Psoas muscle (tissue), 8 donors: ENCODE measurements at regions of chr1 and their contacts with region 1.

Region 1: GRCh38 chr1:27725374-27726173 is at the start of gene FAM76A:
- DNase-seq: peak; percentile 99 to 100
- ATAC-seq: peak; percentile 96 to 98 (median 96)
- H3K4me3 ChIP-seq: peak within 1 kb of the TSS; percentile 95
- H3K27ac ChIP-seq: peak within 1 kb of the TSS; percentile 94
- H3K4me1 ChIP-seq: peaks cover 18% of the 10 kb centered on the region
- H3K27me3 ChIP-seq: no peaks in the 10 kb centered on the region
- CTCF ChIP-seq: peak; percentile 34
- total RNA-seq, gene FAM76A: 7.6 to 10.7 (median 9.3) TPM

Region 2: GRCh38 chr1:27671964-27672749 is 53.4 kb before region 1 on chr1 and contains the start of gene IFI6:
- intact Hi-C with region 1: loop called (anchors 5 to 10 kb)
- DNase-seq: peak; percentile 79 to 87
- ATAC-seq: peak; percentile 92 to 96 (median 94)
- H3K4me3 ChIP-seq: peak within 1 kb of the TSS; percentile 73
- H3K27ac ChIP-seq: peak within 1 kb of the TSS; percentile 77
- H3K4me1 ChIP-seq: peaks cover 13% of the 10 kb centered on the region
- H3K27me3 ChIP-seq: no peaks in the 10 kb centered on the region
- CTCF ChIP-seq: peak; percentile 36
- total RNA-seq, gene IFI6: 7.8 to 25.8 (median 15.3) TPM

Region 3: DNA sequence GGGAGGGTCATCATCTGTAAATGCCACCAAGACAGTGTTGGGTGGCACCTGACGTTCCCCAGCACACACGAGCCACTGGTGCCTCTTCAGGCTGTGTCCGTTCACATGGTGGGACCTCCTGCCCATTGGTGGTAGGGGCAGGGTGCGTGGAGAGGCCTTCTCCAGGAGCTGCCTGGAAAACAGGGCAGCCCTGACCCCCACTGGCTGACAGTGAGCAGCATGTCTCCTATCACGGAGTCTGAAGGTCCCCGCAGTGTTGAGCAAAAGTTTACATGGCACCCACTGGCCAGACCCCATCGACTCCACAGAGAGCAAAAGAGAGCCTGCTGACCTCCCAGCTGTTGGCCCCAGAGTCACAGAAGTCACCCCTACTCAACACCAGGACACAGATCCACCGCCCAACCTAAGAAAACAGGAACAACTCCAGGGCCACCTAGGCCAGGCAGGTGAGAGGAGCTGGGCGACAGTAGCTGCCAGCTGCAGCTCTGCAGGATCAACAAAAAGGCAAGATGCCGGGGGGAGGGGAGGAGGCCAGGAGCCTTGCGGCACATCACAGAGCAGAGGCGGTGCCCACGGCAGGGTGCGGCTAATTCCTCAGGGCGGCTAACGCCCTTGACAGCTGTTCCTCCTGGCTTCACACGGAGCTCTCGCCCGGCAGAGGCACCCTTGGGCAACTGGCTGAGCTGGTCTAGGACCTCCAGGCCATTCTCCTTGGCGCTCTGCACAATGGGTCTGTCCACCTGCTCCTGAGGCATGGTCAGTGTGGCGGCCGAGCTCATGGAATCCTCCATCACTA is 39.2 kb before region 1 on chr1:
- intact Hi-C with region 1: no loop called
- DNase-seq: no peak
- ATAC-seq: peak in 1 of 4 donors; percentile 19
- H3K4me3 ChIP-seq: no peak overlapping the region
- H3K27ac ChIP-seq: no peak overlapping the region
- H3K4me1 ChIP-seq: no peaks in the 10 kb centered on the region
- H3K27me3 ChIP-seq: peaks cover 0 to 2% (median 0%) of the 10 kb centered on the region in 3 donors
- CTCF ChIP-seq: no peak

Region 4: DNA sequence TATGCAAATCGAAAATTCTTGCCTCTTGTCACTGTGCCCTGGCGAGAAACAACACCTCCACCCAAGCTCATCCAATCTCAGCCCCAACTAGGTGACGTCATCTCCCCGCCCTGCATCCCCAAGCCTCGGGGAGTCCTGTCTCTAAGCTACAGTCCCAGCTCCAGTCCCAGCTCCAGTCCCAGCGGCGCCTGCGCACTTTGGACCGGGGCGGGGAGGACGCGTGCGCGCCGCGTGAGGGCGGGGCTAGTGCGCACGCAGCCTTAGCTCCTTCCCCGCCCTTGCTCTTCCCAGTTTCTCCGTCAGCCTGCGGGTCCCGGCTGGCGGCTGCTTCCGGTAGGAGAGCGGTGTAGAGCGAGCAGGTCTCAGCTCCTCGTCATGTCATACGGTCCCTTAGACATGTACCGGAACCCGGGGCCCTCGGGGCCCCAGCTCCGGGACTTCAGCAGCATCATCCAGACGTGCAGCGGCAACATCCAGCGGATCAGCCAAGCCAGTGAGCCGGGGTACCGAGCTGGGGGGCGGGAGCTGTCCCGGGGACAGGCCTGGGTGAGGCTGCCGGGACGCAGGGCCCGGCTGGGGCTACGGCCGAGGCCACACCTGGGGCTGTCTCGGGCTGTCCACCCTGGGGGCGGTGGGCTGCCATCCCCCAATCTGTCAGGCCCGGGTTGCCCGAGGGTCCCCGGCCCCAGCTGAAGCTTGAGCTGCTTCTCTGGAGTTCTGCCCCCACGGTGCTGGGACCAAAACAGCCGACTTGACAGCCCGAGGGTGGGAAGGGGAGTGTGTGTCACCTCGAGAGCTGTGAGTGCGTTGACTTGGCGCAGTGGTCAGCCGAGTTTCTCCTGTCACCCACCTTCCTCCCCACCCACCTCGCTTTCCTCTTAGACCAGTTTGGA is 47.6 kb after region 1 on chr1 and contains the start of gene STX12:
- intact Hi-C with region 1: loop called in 1 of 2 experiments (anchors 5 kb)
- DNase-seq: peak; percentile 99
- ATAC-seq: peak; percentile 98 to 100 (median 99)
- H3K4me3 ChIP-seq: peak within 1 kb of the TSS; percentile 98
- H3K27ac ChIP-seq: peak within 1 kb of the TSS; percentile 95
- H3K4me1 ChIP-seq: peaks cover 20% of the 10 kb centered on the region
- H3K27me3 ChIP-seq: no peaks in the 10 kb centered on the region
- CTCF ChIP-seq: no peak
- total RNA-seq, gene STX12: 19.5 to 33.6 (median 28.9) TPM

Region 5: GRCh38 chr1:27804791-27805190 is 79.2 kb after region 1 on chr1:
- intact Hi-C with region 1: no loop called
- DNase-seq: no peak
- ATAC-seq: no peak
- H3K4me3 ChIP-seq: no peak overlapping the region
- H3K27ac ChIP-seq: no peak overlapping the region
- H3K4me1 ChIP-seq: no peaks in the 10 kb centered on the region
- H3K27me3 ChIP-seq: no peaks in the 10 kb centered on the region
- CTCF ChIP-seq: no peak

Region 6: DNA sequence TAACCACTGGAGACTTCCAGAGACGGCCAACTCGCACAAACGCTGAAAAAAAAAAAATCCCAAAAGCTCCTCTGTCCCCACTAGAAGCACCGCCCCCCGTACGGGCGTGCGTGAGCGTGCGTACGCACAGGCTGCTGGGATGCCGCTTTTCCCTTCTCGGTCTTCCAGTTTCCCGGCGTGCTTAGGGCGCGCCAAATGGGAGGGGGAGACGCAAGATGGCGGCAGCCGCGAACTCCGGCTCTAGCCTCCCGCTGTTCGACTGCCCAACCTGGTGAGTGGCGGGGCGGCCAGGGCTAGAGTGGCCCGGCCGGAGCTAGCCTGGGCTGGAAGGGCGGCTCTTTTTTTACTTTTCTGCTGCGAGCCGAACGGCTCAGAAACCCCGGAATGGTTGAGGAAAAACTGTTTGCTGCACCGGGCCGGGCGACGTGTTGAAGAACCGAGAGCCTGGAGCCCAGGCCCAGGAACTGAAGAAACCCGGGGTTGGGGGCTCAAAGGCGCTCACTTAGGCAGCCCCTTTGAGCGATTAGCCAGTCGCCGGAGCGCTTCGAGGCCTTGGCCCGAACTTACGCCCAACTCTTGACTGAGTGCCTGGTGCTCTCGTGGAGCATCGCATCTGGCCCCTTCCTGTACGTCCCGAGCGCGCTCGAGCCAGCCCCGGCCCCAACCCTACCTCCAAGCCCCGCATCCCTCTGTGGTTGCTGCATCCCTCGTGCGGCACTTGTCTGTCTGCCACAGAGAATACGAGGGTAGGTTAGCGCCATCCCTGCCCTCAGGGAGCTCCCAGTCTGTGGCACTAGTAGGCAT is 105.2 kb after region 1 on chr1 and contains the start of gene PPP1R8:
- intact Hi-C with region 1: no loop called
- DNase-seq: peak; percentile 94 to 96
- ATAC-seq: peak; percentile 99 to 100 (median 100)
- H3K4me3 ChIP-seq: peak within 1 kb of the TSS; percentile 92
- H3K27ac ChIP-seq: peak within 1 kb of the TSS; percentile 84
- H3K4me1 ChIP-seq: peaks cover 30% of the 10 kb centered on the region
- H3K27me3 ChIP-seq: no peaks in the 10 kb centered on the region
- CTCF ChIP-seq: no peak
- total RNA-seq, gene PPP1R8: 20.6 to 28.2 (median 24.5) TPM